MCF 10A (cell line): ENCODE measurements at regions of chr15 and their contacts with region 1.

Region 1: GRCh38 chr15:40769274-40770146 is at the start of gene C15orf62:
- DNase-seq: peak; percentile 96
- H3K4me3 Mint-ChIP-seq: peak within 1 kb of the TSS; percentile 64
- H3K27ac Mint-ChIP-seq: peak within 1 kb of the TSS; percentile 84
- H3K4me1 Mint-ChIP-seq: peaks cover 48% of the 10 kb centered on the region
- H3K27me3 Mint-ChIP-seq: no peaks in the 10 kb centered on the region
- CTCF ChIP-seq: no peak
- total RNA-seq, gene C15orf62: 0.26 and 0.52 TPM in 2 replicates

Region 2: GRCh38 chr15:40743921-40744814 is 25.3 kb before region 1 on chr15:
- CTCF ChIA-PET with region 1: interaction called, 4 read pairs
- POLR2A ChIA-PET with region 1: interaction called, 14 read pairs
- intact Hi-C with region 1: loop called (anchors 2 kb)
- DNase-seq: peak; percentile 88
- H3K4me3 Mint-ChIP-seq: no peak overlapping the region
- H3K27ac Mint-ChIP-seq: peak overlapping the region; percentile 33
- H3K4me1 Mint-ChIP-seq: peaks cover 7% of the 10 kb centered on the region
- H3K27me3 Mint-ChIP-seq: no peaks in the 10 kb centered on the region
- CTCF ChIP-seq: no peak

Region 3: GRCh38 chr15:40754883-40755811 is 14.4 kb before region 1 on chr15 and contains the start of gene RMDN3:
- CTCF ChIA-PET with region 1: interaction called, 4 read pairs
- POLR2A ChIA-PET with region 1: interaction called, 13 read pairs
- intact Hi-C with region 1: no loop called
- DNase-seq: peak; percentile 92
- H3K4me3 Mint-ChIP-seq: peak within 1 kb of the TSS; percentile 93
- H3K27ac Mint-ChIP-seq: peak within 1 kb of the TSS; percentile 89
- H3K4me1 Mint-ChIP-seq: no peaks in the 10 kb centered on the region
- H3K27me3 Mint-ChIP-seq: no peaks in the 10 kb centered on the region
- CTCF ChIP-seq: no peak
- total RNA-seq, gene RMDN3: 31.8 and 36.1 TPM in 2 replicates

Region 4: DNA sequence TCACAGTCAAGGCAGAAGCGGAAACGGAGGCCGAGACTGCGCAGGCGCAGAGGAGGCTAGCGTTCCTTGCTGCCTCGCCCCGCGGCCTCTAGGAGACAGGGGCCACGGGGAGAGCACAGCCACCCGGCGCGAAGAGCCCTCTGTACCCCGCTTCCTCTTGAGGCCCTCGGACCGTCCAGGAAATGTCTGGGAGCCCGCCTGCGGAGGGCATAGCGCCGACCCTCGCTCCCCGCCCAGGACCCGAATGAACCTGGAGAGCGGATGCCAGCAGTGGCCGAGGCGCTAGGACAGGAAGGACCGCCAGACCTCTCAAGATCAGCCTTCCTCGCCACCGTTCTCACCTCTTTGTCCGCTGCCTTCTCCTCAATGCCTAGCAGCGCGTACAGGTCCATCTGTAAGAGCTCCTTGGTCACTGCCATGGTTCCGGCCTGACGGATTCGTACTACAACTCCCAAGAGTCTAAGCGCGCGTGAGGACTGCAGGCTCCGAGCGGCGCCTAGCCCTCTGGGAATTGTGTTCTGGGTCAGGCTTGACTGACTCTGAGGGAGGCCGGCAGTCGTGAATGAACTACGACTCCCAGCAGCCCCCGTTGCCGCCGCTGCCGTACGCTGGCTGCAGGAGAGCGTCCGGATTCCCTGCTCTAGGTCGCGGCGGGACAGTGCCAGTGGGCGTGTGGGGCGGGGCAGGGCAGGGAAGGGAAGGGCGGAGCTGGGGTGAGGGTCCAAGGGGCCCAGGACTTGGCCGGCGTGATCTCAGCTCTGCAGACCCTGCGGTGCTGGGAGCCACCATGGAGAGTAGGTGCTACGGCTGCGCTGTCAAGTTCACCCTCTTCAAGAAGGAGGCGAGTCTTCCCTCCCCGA is 37.7 kb after region 1 on chr15 and contains the starts of genes DNAJC17 and ZFYVE19:
- CTCF ChIA-PET with region 1: interaction called, 3 read pairs
- POLR2A ChIA-PET with region 1: interaction called, 15 read pairs
- intact Hi-C with region 1: no loop called
- DNase-seq: peak; percentile 98
- H3K4me3 Mint-ChIP-seq: peak within 1 kb of the TSS; percentile 81
- H3K27ac Mint-ChIP-seq: peak within 1 kb of the TSS; percentile 83
- H3K4me1 Mint-ChIP-seq: peaks cover 12% of the 10 kb centered on the region
- H3K27me3 Mint-ChIP-seq: no peaks in the 10 kb centered on the region
- CTCF ChIP-seq: peak; percentile 10
- total RNA-seq, gene DNAJC17: 55.1 and 58.1 TPM in 2 replicates
- total RNA-seq, gene ZFYVE19: 19.2 and 19.9 TPM in 2 replicates